Activated B cell treated with CpG ODN at 0.5 μM for 24 hours (primary cell): ENCODE measurements at regions of chr2 and their contacts with region 1.

Region 1: DNA sequence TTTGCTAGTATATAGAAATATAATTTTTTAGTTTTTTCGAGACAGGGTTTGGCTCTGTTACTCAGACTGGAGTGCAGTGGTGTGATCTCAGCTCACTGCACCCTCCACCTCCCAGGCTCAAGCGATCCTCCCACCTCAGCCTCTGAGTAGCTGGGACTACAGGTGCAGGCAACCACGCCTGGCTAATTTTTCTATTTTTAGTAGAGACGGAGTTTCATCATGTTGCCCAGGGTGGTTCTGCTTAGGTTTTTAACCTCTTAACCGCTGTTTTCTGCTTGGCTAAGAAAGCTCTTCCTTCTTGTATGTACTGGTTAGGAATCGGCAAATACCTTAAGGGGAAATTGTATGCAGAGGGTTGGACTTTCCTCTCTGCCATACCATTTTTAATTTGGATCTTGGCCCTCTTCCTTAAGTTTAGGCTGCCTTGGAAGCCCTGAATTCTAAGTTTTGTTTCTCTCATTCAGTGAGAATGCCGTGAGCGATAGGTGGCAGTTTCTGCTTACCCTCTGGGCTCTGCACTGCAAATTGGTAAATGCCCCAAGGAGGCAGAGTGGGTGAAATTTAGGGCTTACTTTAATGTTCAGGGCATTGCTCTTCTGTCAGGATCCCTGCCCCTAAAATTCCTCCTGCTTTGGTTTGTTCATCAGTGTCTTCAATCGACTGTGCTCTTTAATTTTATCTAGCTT is 32.3 kb downstream of the EML6 start:
- DNase-seq: no peak
- ATAC-seq: peak; percentile 67
- H3K4me3 Mint-ChIP-seq: peak overlapping the region; percentile 74
- H3K27ac Mint-ChIP-seq: peak overlapping the region; percentile 92
- H3K4me1 Mint-ChIP-seq: peaks cover 50% of the 10 kb centered on the region
- H3K27me3 Mint-ChIP-seq: no peaks in the 10 kb centered on the region
- CTCF ChIP-seq: no peak

Region 2: DNA sequence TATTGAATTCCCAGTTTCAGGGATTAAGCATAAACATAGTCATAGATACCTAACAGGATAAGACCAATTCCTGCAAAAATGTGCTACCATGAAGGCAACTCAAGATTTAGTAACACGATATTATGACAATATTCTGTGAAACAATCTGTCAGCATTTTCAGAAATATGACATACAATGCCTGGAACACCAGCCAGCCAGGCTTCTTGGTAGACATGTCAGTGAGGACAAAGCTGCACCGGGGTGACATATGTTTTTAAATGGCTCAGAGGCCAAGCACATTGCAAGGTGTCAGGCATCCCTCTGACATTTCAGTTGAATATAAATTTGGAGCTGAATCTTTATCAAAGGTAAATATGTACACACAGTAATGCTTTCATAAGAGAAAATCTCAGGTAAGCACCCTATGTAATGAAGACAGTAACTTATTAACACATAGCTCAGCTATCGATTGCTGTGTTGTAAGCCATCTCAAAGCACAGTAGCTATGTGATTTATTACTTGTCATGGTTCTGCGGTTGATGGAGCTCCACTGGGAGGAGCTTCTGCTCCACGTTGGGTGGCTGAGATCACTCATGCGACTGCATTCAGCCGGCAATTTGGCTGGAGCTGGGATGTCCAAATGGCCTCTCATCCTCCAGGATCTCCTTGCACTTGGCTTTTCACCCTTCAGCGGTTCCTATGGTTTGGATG is 64.2 kb before region 1 on chr2:
- CTCF ChIA-PET with region 1: no interaction called
- POLR2A ChIA-PET with region 1: no interaction called
- intact Hi-C with region 1: no loop called
- DNase-seq: no peak
- ATAC-seq: no peak
- H3K4me3 Mint-ChIP-seq: no peak overlapping the region
- H3K27ac Mint-ChIP-seq: no peak overlapping the region
- H3K4me1 Mint-ChIP-seq: no peaks in the 10 kb centered on the region
- H3K27me3 Mint-ChIP-seq: peaks cover 3% of the 10 kb centered on the region
- CTCF ChIP-seq: no peak

Region 3: GRCh38 chr2:54787755-54788366 is 32.1 kb after region 1 on chr2:
- CTCF ChIA-PET with region 1: no interaction called
- POLR2A ChIA-PET with region 1: interaction called, 4 read pairs
- intact Hi-C with region 1: loop called (anchors 2 kb)
- DNase-seq: peak; percentile 15
- ATAC-seq: peak; percentile 75
- H3K4me3 Mint-ChIP-seq: peak overlapping the region; percentile 63
- H3K27ac Mint-ChIP-seq: peak overlapping the region; percentile 78
- H3K4me1 Mint-ChIP-seq: peaks cover 41% of the 10 kb centered on the region
- H3K27me3 Mint-ChIP-seq: no peaks in the 10 kb centered on the region
- CTCF ChIP-seq: no peak

Region 4: DNA sequence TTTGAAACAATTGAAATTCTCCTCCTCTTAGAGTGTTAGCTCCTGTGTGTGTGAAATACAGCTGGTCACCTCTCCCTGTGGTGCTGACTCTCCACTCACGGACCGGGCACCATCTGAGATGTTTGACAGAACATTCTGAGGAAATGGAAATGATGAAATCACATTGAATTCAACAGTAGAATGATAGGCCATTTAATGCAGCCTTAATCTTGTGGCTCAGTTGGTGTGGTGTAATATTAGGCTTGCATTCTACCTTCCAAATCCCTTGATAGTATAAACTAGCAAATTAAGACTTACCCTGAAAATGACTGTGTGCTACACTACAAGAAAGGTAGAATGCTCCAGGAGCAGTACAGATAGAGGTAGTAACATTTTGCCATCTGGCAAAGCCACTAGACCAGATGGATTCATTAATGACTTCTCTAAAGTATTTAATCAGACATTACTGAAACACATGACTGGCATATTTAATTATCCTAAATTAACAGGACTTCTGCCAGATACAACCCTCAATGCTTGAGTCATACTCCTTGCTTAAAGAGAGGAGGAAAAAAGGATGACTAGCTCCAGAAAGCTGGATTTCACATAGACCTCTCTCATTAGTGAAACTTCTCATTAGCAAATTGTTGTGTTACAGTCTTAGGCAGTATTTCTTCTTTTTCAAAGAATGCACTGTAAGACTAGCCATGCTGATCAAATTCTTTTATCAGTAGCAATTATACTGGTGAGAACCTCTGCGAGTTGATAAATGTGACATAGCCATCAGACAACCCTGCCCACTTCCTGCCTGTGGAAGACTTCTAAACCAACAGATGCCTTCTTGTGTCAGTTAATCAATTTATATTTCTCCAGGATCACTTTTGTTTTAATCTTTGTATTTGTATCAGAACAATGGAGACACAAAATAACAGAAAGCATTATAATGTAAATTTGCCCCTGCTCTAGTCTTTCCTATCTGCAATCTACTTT is 48.3 kb after region 1 on chr2:
- CTCF ChIA-PET with region 1: no interaction called
- POLR2A ChIA-PET with region 1: no interaction called
- intact Hi-C with region 1: loop called (anchors 5 kb)
- DNase-seq: no peak
- ATAC-seq: no peak
- H3K4me3 Mint-ChIP-seq: no peak overlapping the region
- H3K27ac Mint-ChIP-seq: no peak overlapping the region
- H3K4me1 Mint-ChIP-seq: peaks cover 5% of the 10 kb centered on the region
- H3K27me3 Mint-ChIP-seq: no peaks in the 10 kb centered on the region
- CTCF ChIP-seq: no peak